WTC11 (cell line): ENCODE measurements at regions of chr11 and their contacts with region 1.

Region 1: GRCh38 chr11:8384199-8384821 is 120.6 kb upstream of the LMO1 start:
- DNase-seq: peak; percentile 68
- ATAC-seq: peak; percentile 79
- H3K4me3 Mint-ChIP-seq: no peak overlapping the region
- H3K27ac Mint-ChIP-seq: no peak overlapping the region
- H3K4me1 Mint-ChIP-seq: peaks cover 19% of the 10 kb centered on the region
- H3K27me3 Mint-ChIP-seq: no peaks in the 10 kb centered on the region
- CTCF ChIP-seq: no peak

Region 2: GRCh38 chr11:8033305-8034105 is 350.8 kb before region 1 on chr11:
- CTCF ChIA-PET with region 1: no interaction called
- POLR2A ChIA-PET with region 1: no interaction called
- DNase-seq: peak; percentile 78
- ATAC-seq: peak; percentile 92
- H3K4me3 Mint-ChIP-seq: peak overlapping the region; percentile 51
- H3K27ac Mint-ChIP-seq: no peak overlapping the region
- H3K4me1 Mint-ChIP-seq: peaks cover 15% of the 10 kb centered on the region
- H3K27me3 Mint-ChIP-seq: peaks cover 10% of the 10 kb centered on the region
- CTCF ChIP-seq: peak; percentile 29; the same call in 1 of the 2 replicates

Region 3: GRCh38 chr11:8566613-8567210 is 182.4 kb after region 1 on chr11:
- CTCF ChIA-PET with region 1: interaction called, 18 read pairs
- POLR2A ChIA-PET with region 1: no interaction called
- DNase-seq: no peak
- ATAC-seq: no peak; the same call in 1 of the 2 replicates
- H3K4me3 Mint-ChIP-seq: no peak overlapping the region
- H3K27ac Mint-ChIP-seq: no peak overlapping the region
- H3K4me1 Mint-ChIP-seq: no peaks in the 10 kb centered on the region
- H3K27me3 Mint-ChIP-seq: no peaks in the 10 kb centered on the region
- CTCF ChIP-seq: peak; percentile 34